Gastrocnemius medialis (tissue), 4 donors: ENCODE measurements at regions of chr14 and their contacts with region 1.

Region 1: GRCh38 chr14:55430024-55430690 is 10.3 kb downstream of the TBPL2 start:
- DNase-seq: peak in 1 of 2 donors; percentile 20
- ATAC-seq: peak; percentile 95 to 96
- H3K4me3 ChIP-seq: no peak overlapping the region
- H3K27ac ChIP-seq: peak overlapping the region in 1 of 4 donors; percentile 2
- H3K4me1 ChIP-seq: no peaks in the 10 kb centered on the region
- H3K27me3 ChIP-seq: no peaks in the 10 kb centered on the region
- CTCF ChIP-seq: peak; percentile 18 to 62 (median 51)
- POLR2A ChIP-seq: no peak

Region 2: DNA sequence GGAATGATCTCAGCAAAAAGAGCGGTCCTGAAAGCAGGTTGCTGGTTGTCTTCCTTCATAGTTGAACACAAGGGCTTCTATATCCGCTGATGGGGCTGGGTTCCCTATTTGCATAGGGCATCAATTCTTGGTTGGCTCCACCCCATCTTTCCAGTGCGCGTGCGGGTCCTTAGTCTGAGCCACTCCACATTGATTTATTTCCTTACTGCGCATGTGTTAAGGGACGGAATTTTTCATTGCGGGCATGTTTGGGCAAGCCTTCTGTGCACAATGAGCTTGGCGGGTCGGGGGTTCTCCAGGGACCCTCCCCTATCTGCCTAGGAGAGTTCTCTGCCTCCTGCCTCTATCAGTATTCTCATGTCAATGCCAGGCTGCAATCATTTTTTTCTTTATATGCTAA is 217.5 kb before region 1 on chr14:
- in situ Hi-C with region 1: loop called in 3 of 4 experiments (anchors 5 to 10 kb)
- intact Hi-C with region 1: loop called (anchors 1 kb)
- DNase-seq: no peak
- ATAC-seq: no peak
- H3K4me3 ChIP-seq: no peak overlapping the region
- H3K27ac ChIP-seq: no peak overlapping the region
- H3K4me1 ChIP-seq: no peaks in the 10 kb centered on the region
- H3K27me3 ChIP-seq: no peaks in the 10 kb centered on the region
- CTCF ChIP-seq: no peak
- POLR2A ChIP-seq: no peak

Region 3: DNA sequence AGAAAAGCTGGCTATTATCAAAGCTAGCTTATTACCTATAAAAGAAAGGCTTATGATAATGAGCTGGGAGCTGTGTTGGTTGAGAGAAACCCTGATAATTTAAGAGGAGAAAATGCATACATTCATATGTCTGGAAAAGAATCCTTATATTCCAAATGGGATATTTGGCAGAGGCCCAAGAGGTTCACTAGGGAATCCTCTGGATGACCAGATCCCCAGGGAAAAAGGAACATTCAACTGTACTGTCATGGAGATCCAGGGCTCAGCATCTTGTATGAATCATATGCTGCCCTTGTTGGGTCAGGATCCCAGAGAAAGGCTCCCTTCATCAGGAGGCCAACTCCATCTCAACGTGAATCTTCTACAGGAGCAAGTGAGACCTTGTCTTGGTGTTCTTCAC is 175.6 kb before region 1 on chr14:
- in situ Hi-C with region 1: loop called in 1 of 4 experiments (anchors 10 kb)
- intact Hi-C with region 1: no loop called
- DNase-seq: no peak
- ATAC-seq: no peak
- H3K4me3 ChIP-seq: no peak overlapping the region
- H3K27ac ChIP-seq: no peak overlapping the region
- H3K4me1 ChIP-seq: no peaks in the 10 kb centered on the region
- H3K27me3 ChIP-seq: no peaks in the 10 kb centered on the region
- CTCF ChIP-seq: no peak
- POLR2A ChIP-seq: no peak

Region 4: GRCh38 chr14:55377236-55377635 is 52.9 kb before region 1 on chr14:
- in situ Hi-C with region 1: loop called in 1 of 4 experiments (anchors 5 kb)
- intact Hi-C with region 1: no loop called
- DNase-seq: no peak
- ATAC-seq: no peak
- H3K4me3 ChIP-seq: no peak overlapping the region
- H3K27ac ChIP-seq: no peak overlapping the region
- H3K4me1 ChIP-seq: peaks cover under 1 to 4% of the 10 kb centered on the region in 2 donors
- H3K27me3 ChIP-seq: no peaks in the 10 kb centered on the region
- CTCF ChIP-seq: no peak
- POLR2A ChIP-seq: no peak